ENCODE measurements at regions of chr2 and their contacts with region 1.

Region 1: GRCh38 chr2:37324786-37325624 is at the start of gene PRKD3:
- DNase-seq: peak in 2 of 5 donors; percentile 50 to 55
- ATAC-seq: peak; percentile 3 to 95 (median 92)
- H3K4me3 ChIP-seq: peak within 1 kb of the TSS; percentile 66 to 95 (median 84)
- H3K27ac ChIP-seq: peak within 1 kb of the TSS; percentile 52 to 93 (median 89)
- H3K4me1 ChIP-seq: peaks cover 6 to 45% (median 25%) of the 10 kb centered on the region in 12 donors
- H3K27me3 ChIP-seq: no peaks in the 10 kb centered on the region
- CTCF ChIP-seq: no peak
- POLR2A ChIP-seq: peak in 1 of 2 donors; percentile 58
- total RNA-seq, gene PRKD3: 9.6 to 24.5 (median 12.5) TPM

Region 2: DNA sequence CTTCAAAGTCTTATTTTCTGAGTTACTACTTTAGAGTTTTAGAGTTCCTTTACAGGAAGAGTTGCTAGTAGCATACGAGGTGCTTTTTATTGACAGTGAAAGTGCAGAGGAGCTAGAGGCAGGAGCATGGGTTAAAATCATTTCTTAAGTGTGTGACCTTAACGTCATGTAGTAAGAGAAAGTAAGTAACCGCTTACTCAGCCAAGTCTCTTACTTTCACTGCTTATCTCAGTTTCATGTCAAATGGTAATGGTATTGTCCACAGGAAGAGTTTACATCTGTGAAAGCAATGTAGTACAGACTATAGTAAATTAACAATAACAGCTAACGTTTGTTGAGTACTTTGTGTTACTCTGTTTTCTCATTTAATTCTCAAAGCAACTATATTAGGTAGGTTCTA is 81.0 kb before region 1 on chr2:
- intact Hi-C with region 1: loop called in 1 of 10 experiments (anchors 5 kb)
- DNase-seq: no peak
- ATAC-seq: peak in 3 of 4 donors; percentile 15 to 95 (median 39)
- H3K4me3 ChIP-seq: no peak overlapping the region
- H3K27ac ChIP-seq: peak overlapping the region in 4 of 12 donors; percentile 10 to 46 (median 42)
- H3K4me1 ChIP-seq: peaks cover 0 to 4% (median 0%) of the 10 kb centered on the region in 12 donors
- H3K27me3 ChIP-seq: no peaks in the 10 kb centered on the region
- CTCF ChIP-seq: no peak
- POLR2A ChIP-seq: no peak

Region 3: DNA sequence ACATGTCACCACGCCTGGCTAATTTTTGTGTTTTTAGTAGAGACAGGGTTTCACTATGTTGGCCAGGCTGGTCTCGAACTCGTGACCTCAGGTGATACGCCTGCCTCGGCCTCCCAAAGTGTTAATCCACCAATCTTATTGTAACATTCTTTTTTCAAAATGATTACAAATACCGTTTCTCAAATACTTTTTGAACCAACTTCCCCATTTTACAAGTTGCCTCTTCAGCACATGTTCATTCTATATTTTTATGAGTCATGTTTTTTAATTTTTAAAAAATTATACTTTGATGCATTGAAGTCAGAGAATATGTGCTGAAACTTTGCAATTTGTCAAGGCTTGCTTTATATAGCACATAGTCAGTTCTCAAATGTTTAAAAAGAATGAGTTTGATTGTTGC is 77.6 kb after region 1 on chr2:
- intact Hi-C with region 1: no loop called
- DNase-seq: no peak
- ATAC-seq: no peak
- H3K4me3 ChIP-seq: no peak overlapping the region
- H3K27ac ChIP-seq: no peak overlapping the region
- H3K4me1 ChIP-seq: peaks cover 0 to 4% (median 0%) of the 10 kb centered on the region in 12 donors
- H3K27me3 ChIP-seq: no peaks in the 10 kb centered on the region
- CTCF ChIP-seq: no peak
- POLR2A ChIP-seq: no peak